ENCODE measurements at regions of chr1 and their contacts with region 1.

Region 1: DNA sequence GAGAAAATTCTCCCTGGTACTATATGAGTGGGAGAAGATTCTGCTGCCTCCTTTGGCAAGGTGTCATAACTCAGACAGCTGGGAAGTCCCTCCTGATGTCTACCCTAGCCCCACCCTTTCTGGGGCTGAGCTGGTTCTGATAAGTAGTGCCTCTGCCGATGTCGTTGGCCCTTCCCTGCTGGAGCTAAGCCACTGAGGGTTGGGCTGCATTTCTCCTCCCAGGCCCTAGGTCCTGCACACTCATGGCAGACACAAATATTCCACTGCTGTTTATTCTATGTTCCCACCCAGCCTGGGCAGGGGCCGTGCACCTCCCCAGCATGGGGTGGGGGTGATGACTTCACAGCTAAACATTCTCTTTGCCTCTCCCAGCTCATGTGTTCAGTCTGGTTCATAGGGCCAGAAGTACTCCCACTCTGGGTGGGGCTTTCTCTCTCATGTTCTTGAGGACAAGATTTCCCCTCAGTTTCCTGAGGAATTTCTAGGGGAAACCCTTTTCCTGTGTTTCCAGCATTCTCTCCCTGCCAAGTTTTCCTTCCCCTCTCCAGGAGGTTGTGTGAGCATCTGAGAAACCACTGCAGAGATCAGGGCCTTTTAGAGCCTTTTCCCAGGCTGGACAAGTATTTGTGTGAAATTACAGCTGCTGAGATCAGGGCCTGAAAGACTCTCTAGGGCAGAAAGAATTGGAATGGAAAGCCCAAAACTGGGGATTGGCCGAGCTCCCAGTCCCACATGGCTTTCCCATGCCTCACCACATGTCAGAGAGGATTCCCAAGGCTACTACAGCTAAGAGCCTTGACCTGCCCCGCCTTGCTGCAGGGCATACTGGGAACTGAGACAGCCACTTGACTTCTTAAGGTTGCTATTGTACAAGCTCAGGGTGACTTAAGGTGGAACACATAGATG is 66.2 kb downstream of the ATP2B4 start:
- DNase-seq: peak; percentile 75
- H3K4me3 ChIP-seq: no peak overlapping the region
- H3K27ac ChIP-seq: peak overlapping the region; percentile 80 to 89 (median 84)
- H3K4me1 ChIP-seq: peaks cover 34 to 87% (median 56%) of the 10 kb centered on the region in 4 donors
- H3K27me3 ChIP-seq: no peaks in the 10 kb centered on the region
- CTCF ChIP-seq: no peak
- EP300 ChIP-seq: no peak
- POLR2A ChIP-seq: no peak

Region 2: GRCh38 chr1:203512830-203513611 is 179.8 kb before region 1 on chr1:
- in situ Hi-C with region 1: no loop called
- intact Hi-C with region 1: no loop called
- DNase-seq: peak; percentile 40
- H3K4me3 ChIP-seq: no peak overlapping the region
- H3K27ac ChIP-seq: peak overlapping the region; percentile 73 to 83 (median 80)
- H3K4me1 ChIP-seq: peaks cover 10 to 32% (median 21%) of the 10 kb centered on the region in 4 donors
- H3K27me3 ChIP-seq: no peaks in the 10 kb centered on the region
- CTCF ChIP-seq: no peak
- EP300 ChIP-seq: no peak
- POLR2A ChIP-seq: no peak

Region 3: GRCh38 chr1:203625628-203626019 is 67.2 kb before region 1 on chr1:
- in situ Hi-C with region 1: loop called in 1 of 4 experiments (anchors 10 kb)
- intact Hi-C with region 1: loop called (anchors 1 kb)
- DNase-seq: peak; percentile 72
- H3K4me3 ChIP-seq: peak overlapping the region in 1 of 4 donors; percentile 63
- H3K27ac ChIP-seq: peak overlapping the region; percentile 89 to 95 (median 93)
- H3K4me1 ChIP-seq: peaks cover 13 to 56% (median 40%) of the 10 kb centered on the region in 4 donors
- H3K27me3 ChIP-seq: no peaks in the 10 kb centered on the region
- CTCF ChIP-seq: peak in 1 of 5 experiments; percentile 1
- EP300 ChIP-seq: no peak
- POLR2A ChIP-seq: no peak

Region 4: DNA sequence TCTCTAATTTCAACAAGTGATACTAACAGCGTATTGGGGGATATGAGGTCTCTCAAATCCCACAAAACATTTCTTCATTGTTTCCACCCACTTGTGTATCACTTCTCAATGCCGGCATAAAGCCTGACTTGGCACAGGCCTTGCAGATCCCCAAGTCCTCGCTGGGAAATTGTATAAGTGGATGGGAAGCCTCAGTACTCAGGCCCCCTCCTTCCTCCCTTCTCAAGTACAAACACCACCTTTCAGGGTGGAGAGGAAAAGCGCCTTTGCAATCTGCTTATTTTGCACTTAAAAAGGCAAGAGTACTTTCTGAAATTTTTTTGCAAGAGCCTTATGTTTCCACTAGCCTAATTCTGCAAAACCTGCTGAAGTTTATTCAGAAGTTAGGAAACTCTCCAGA is 1689.7 kb after region 1 on chr1:
- in situ Hi-C with region 1: no loop called
- intact Hi-C with region 1: no loop called
- DNase-seq: no peak
- H3K4me3 ChIP-seq: no peak overlapping the region
- H3K27ac ChIP-seq: no peak overlapping the region
- H3K4me1 ChIP-seq: no peaks in the 10 kb centered on the region
- H3K27me3 ChIP-seq: peaks cover 3% of the 10 kb centered on the region
- CTCF ChIP-seq: no peak
- EP300 ChIP-seq: no peak
- POLR2A ChIP-seq: no peak